BJ (cell line): ENCODE measurements at regions of chr3 and their contacts with region 1.

Region 1: DNA sequence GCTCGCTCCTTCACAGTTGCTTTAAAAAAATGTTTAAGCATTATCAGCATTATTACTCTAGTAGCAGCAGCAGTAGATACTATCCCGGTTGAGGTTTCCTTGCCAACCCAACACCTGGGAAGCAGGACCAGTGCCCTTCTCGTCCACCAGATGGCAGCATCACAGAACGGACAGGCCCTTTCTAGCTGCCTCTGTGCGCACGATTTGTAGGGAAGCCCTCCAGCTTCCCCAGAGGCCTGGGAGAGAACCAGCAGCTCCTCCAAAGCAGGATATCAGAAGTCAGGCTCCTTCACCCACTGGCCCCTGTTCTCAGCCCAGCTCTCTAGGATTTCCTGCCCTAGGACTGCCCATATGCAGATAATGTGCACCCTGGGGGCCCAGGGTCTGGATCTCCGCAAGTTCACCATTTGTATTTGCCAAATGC is 16.8 kb upstream of the ESYT3 start:
- DNase-seq: no peak
- H3K4me3 ChIP-seq: no peak overlapping the region
- H3K27me3 ChIP-seq: no peaks in the 10 kb centered on the region
- CTCF ChIP-seq: peak; percentile 98

Region 2: DNA sequence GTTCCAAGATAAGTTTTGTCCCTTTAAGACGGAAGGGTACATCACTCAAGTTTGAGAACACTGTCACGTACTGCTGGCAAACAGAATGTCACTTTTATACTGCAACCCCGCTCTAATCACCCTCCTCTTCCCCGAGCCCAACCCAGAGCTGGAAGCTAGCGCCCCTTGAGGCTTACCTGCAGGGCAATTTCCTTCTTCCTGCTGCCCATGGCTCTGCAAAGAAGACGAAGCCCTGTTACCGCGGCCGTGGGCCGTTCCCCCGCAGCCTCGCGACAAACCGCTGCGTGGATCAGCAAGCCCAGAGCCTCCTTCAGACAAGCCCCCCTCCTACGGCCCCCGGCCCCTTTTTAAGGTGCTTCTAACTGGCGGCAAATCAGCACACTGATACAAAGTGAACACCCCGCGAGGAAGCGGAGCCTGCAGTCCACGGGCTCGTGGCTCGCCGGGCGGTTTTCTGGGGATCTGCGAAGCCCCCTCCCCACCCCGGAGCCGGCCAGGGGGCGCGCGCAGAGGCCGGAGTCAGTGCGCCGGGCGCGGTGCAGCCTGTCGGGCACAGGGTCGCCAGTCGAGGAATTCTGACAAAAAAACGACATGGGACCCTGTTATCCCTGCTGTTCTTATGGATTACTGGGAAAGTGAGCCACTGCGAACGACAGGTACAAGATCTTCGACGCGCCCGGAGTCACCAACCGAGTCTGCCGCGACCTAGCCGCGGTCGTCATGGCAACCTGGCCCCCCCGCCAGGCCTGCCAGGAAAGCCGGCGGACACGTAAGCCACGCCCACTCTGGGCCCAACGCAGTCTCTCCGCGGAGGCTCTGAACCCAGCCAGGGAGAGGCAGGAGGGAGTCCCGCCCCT is 88.2 kb before region 1 on chr3 and contains the start of gene NME9:
- CTCF ChIA-PET with region 1: interaction called, 16 read pairs
- POLR2A ChIA-PET with region 1: no interaction called
- DNase-seq: no peak
- H3K4me3 ChIP-seq: peak within 1 kb of the TSS; percentile 52
- H3K27me3 ChIP-seq: 0 out of 2 replicates have a peak, but pooled peaks cover under 1% of the 10 kb centered on the region
- CTCF ChIP-seq: peak; percentile 80
- polyA plus RNA-seq, gene NME9: 0.06 TPM in 1 of 2 replicates, not detected in the other

Region 3: DNA sequence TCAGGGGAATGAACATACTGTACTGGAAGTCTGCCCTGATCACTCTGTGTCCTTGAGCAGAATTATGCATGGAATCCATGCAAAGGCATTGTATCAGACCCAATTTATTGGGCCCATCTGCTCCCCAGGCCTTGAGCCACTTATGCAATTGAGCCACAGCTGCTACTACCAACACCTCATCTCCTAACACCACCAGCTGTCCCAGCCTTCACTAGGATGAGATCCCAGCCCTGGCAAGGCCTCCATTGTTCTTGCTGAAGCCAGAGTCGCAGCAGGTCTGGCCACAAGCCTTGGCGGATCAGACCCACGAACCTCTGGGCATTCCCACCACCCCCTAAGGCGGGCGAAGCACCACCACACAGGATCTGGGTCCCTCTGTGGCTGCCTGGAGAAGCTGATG is 78.8 kb before region 1 on chr3:
- CTCF ChIA-PET with region 1: interaction called, 15 read pairs
- POLR2A ChIA-PET with region 1: no interaction called
- DNase-seq: no peak
- H3K4me3 ChIP-seq: no peak overlapping the region
- H3K27me3 ChIP-seq: 0 out of 2 replicates have a peak, but pooled peaks cover 6% of the 10 kb centered on the region
- CTCF ChIP-seq: no peak

Region 4: GRCh38 chr3:138347960-138348753 is 69.4 kb before region 1 on chr3 and contains the start of gene MRAS:
- CTCF ChIA-PET with region 1: interaction called, 13 read pairs
- POLR2A ChIA-PET with region 1: no interaction called
- DNase-seq: no peak
- H3K4me3 ChIP-seq: peak within 1 kb of the TSS; percentile 66
- H3K27me3 ChIP-seq: no peaks in the 10 kb centered on the region; the same call in 1 of the 2 replicates
- CTCF ChIP-seq: peak; percentile 26; the same call in 1 of the 2 replicates
- polyA plus RNA-seq, gene MRAS: 90.2 and 99.8 TPM in 2 replicates

Region 5: GRCh38 chr3:138398791-138399575 is 18.6 kb before region 1 on chr3:
- CTCF ChIA-PET with region 1: interaction called, 30 read pairs
- POLR2A ChIA-PET with region 1: no interaction called
- DNase-seq: no peak
- H3K4me3 ChIP-seq: no peak overlapping the region
- H3K27me3 ChIP-seq: no peaks in the 10 kb centered on the region
- CTCF ChIP-seq: no peak

Region 6: GRCh38 chr3:138434276-138434874 is 16.8 kb after region 1 on chr3 and contains the start of gene ESYT3:
- CTCF ChIA-PET with region 1: interaction called, 16 read pairs
- POLR2A ChIA-PET with region 1: no interaction called
- DNase-seq: no peak
- H3K4me3 ChIP-seq: peak within 1 kb of the TSS; percentile 44
- H3K27me3 ChIP-seq: peaks cover 24% of the 10 kb centered on the region
- CTCF ChIP-seq: no peak
- polyA plus RNA-seq, gene ESYT3: 0.09 TPM in 2 replicates

Region 7: DNA sequence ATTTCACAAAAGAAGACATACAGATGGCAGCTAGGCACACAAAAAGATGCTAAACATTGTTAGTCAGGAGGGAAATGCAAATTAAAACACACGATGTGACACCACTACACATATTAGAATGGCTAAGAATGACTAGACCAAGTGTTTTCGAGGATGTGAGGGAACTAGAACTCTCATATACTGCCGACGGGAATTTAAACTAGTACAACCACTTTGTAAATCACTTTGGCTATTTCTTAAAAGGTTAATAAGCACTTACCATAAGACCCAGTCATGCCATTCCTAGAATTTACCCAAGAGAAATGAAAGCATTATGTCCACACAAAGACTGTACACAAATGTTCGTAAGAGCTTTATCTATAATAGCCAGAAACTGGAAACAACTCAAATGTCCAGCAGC is 170.9 kb after region 1 on chr3:
- CTCF ChIA-PET with region 1: no interaction called
- POLR2A ChIA-PET with region 1: no interaction called
- DNase-seq: no peak
- H3K4me3 ChIP-seq: no peak overlapping the region
- H3K27me3 ChIP-seq: no peaks in the 10 kb centered on the region
- CTCF ChIP-seq: no peak

Region 8: GRCh38 chr3:138923531-138923994 is 506.0 kb after region 1 on chr3:
- CTCF ChIA-PET with region 1: interaction called, 78 read pairs
- POLR2A ChIA-PET with region 1: no interaction called
- DNase-seq: no peak
- H3K4me3 ChIP-seq: no peak overlapping the region
- H3K27me3 ChIP-seq: peaks cover 4% of the 10 kb centered on the region
- CTCF ChIP-seq: peak; percentile 91